ENCODE measurements at regions of chr4 and their contacts with region 1.

Region 1: GRCh38 chr4:11831739-11832138 is 403.0 kb upstream of the HS3ST1 start:
- DNase-seq: no peak
- H3K4me3 ChIP-seq: no peak overlapping the region
- H3K27ac ChIP-seq: no peak overlapping the region
- H3K4me1 ChIP-seq: no peaks in the 10 kb centered on the region
- H3K27me3 ChIP-seq: no peaks in the 10 kb centered on the region
- CTCF ChIP-seq: no peak
- EP300 ChIP-seq: no peak
- POLR2A ChIP-seq: no peak

Region 2: GRCh38 chr4:11847167-11847566 is 15.4 kb after region 1 on chr4:
- in situ Hi-C with region 1: no loop called
- intact Hi-C with region 1: loop called (anchors 2 kb)
- DNase-seq: no peak
- H3K4me3 ChIP-seq: no peak overlapping the region
- H3K27ac ChIP-seq: no peak overlapping the region
- H3K4me1 ChIP-seq: peaks cover 0 to 21% (median 6%) of the 10 kb centered on the region in 4 donors
- H3K27me3 ChIP-seq: no peaks in the 10 kb centered on the region
- CTCF ChIP-seq: no peak
- EP300 ChIP-seq: no peak
- POLR2A ChIP-seq: no peak